PC-3 (cell line): ENCODE measurements at regions of chr18 and their contacts with region 1.

Region 1: GRCh38 chr18:56575819-56576663 is 62.4 kb downstream of the TXNL1 start:
- DNase-seq: peak; percentile 80
- ATAC-seq: peak; percentile 91
- H3K4me3 ChIP-seq: no peak overlapping the region
- H3K27ac ChIP-seq: no peak overlapping the region
- H3K4me1 ChIP-seq: 0 out of 2 replicates have a peak, but pooled peaks cover 8% of the 10 kb centered on the region
- H3K27me3 ChIP-seq: no peaks in the 10 kb centered on the region
- CTCF ChIP-seq: peak; percentile 87

Region 2: DNA sequence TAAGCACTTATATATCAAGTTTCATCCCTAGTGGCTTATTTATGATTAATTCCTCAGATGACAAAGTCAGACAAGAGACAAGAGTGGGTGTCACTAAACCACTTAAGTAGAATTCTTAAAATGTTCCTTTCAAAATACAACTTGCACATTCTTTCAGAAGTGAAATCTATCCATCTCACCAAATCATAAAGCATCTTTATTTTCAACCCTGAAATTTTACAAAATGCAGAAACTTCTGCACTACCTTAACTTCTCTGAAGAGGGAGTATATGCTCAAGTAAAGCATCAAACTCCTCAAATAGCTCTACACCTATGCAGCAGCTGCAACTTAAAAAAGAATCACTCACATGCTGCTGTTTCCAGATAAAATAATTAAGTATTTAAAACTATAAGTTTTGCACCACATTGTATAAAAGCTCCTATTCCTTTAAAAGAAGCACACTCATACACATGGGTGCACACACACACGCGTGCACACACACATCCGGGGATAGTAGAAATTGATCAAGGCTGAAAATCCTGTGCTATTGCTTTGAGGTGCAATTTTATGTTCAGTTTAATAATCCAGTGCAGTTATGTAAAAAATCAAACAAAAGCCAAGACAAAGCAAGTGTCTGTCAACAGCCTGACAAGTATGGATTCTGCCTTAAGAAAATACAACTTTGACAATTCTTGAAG is 1232.5 kb before region 1 on chr18:
- CTCF ChIA-PET with region 1: no interaction called
- POLR2A ChIA-PET with region 1: no interaction called
- intact Hi-C with region 1: loop called (anchors 2 kb)
- DNase-seq: peak; percentile 46
- ATAC-seq: peak; percentile 37; the same call in 1 of the 2 replicates
- H3K4me3 ChIP-seq: no peak overlapping the region
- H3K27ac ChIP-seq: no peak overlapping the region
- H3K4me1 ChIP-seq: no peaks in the 10 kb centered on the region
- H3K27me3 ChIP-seq: no peaks in the 10 kb centered on the region
- CTCF ChIP-seq: peak; percentile 69

Region 3: GRCh38 chr18:55589625-55590291 is 986.3 kb before region 1 on chr18:
- CTCF ChIA-PET with region 1: no interaction called
- POLR2A ChIA-PET with region 1: no interaction called
- intact Hi-C with region 1: loop called (anchors 2 kb)
- DNase-seq: peak; percentile 93
- ATAC-seq: peak; percentile 88
- H3K4me3 ChIP-seq: peak overlapping the region; percentile 91
- H3K27ac ChIP-seq: peak overlapping the region; percentile 42
- H3K4me1 ChIP-seq: peaks cover 5% of the 10 kb centered on the region; the same call in 1 of the 2 replicates
- H3K27me3 ChIP-seq: no peaks in the 10 kb centered on the region
- CTCF ChIP-seq: no peak

Region 4: GRCh38 chr18:55856229-55856628 is 719.8 kb before region 1 on chr18:
- CTCF ChIA-PET with region 1: no interaction called
- POLR2A ChIA-PET with region 1: no interaction called
- intact Hi-C with region 1: loop called (anchors 10 kb)
- DNase-seq: peak; percentile 99
- ATAC-seq: peak; percentile 95
- H3K4me3 ChIP-seq: peak overlapping the region; percentile 23; the same call in 1 of the 2 replicates
- H3K27ac ChIP-seq: peak overlapping the region; percentile 72
- H3K4me1 ChIP-seq: peaks cover 37% of the 10 kb centered on the region
- H3K27me3 ChIP-seq: no peaks in the 10 kb centered on the region
- CTCF ChIP-seq: no peak